HepG2 (cell line): ENCODE measurements at regions of chr2 and their contacts with region 1.

Region 1: GRCh38 chr2:202238234-202239197 is at the start of gene SUMO1:
- DNase-seq: peak; percentile 94
- ATAC-seq: peak; percentile 95
- H3K4me3 ChIP-seq: peak within 1 kb of the TSS; percentile 96 to 99 (median 99)
- H3K27ac ChIP-seq: peak within 1 kb of the TSS; percentile 74
- H3K4me1 ChIP-seq: peaks cover 29% of the 10 kb centered on the region
- H3K27me3 ChIP-seq: peaks cover 0 to 3% of the 10 kb centered on the region in 2 experiments; a peak in 2 of 5 replicates
- CTCF ChIP-seq: peak; percentile 23; the same call in 1 of the 2 replicates
- EP300 ChIP-seq: no peak
- POLR2A ChIP-seq: peak; percentile 69 to 94
- RAD21 ChIP-seq: peak; percentile 46; the same call in 1 of the 2 replicates
- total RNA-seq, gene SUMO1: 173 and 267 TPM in 2 replicates

Region 2: DNA sequence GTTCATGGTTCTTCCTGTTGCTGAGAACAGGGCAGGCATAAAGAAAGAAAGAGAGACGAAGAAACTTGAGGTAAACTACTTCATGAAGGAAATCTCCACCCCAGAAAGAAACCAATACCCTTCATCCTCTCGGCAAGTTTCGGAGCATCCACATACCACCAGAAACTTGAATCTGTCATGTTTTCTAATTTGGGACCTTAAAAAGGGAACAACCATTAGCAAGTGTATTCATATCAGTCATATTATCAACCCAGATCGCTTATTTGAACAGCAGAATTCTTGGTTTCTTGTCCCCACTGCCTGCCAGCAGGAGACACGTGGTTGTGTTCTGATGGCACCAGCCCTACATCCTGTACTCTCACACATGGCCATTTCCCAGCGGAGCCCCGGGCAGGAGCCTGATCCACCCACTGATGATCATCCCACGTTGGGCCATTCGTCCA is 258.1 kb before region 1 on chr2:
- CTCF ChIA-PET with region 1: no interaction called
- POLR2A ChIA-PET with region 1: no interaction called
- in situ Hi-C with region 1: no loop called
- intact Hi-C with region 1: no loop called
- DNase-seq: no peak
- ATAC-seq: no peak
- H3K4me3 ChIP-seq: no peak overlapping the region
- H3K27ac ChIP-seq: no peak overlapping the region
- H3K4me1 ChIP-seq: peaks cover 28% of the 10 kb centered on the region
- H3K27me3 ChIP-seq: no peaks in the 10 kb centered on the region; a peak in 2 of 5 replicates
- CTCF ChIP-seq: no peak
- EP300 ChIP-seq: no peak
- POLR2A ChIP-seq: no peak
- RAD21 ChIP-seq: no peak

Region 3: DNA sequence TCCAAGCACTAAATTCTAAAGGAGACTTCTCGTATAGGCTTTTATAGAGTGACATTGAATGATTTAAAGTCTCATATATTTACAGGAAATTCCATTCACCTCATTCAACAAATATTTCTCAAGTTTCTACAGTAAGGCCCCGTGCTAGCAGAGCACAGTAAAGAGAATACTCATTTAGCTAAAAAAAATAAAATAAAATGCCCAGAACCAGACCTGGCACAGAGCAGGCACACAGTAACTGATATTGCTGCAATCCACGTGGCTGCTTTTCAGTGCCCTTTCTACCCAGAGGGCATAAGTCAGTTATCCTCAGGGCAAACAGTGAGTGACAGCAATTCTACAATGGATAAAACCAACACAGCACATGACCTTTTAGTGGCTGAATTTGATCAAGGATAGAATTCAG is 52.7 kb before region 1 on chr2:
- CTCF ChIA-PET with region 1: no interaction called
- POLR2A ChIA-PET with region 1: no interaction called
- in situ Hi-C with region 1: no loop called
- intact Hi-C with region 1: no loop called
- DNase-seq: peak; percentile 15
- ATAC-seq: no peak; the same call in 2 of the 3 replicates
- H3K4me3 ChIP-seq: no peak overlapping the region
- H3K27ac ChIP-seq: no peak overlapping the region
- H3K4me1 ChIP-seq: peaks cover 42% of the 10 kb centered on the region
- H3K27me3 ChIP-seq: no peaks in the 10 kb centered on the region
- CTCF ChIP-seq: no peak
- EP300 ChIP-seq: no peak
- POLR2A ChIP-seq: no peak
- RAD21 ChIP-seq: no peak

Region 4: DNA sequence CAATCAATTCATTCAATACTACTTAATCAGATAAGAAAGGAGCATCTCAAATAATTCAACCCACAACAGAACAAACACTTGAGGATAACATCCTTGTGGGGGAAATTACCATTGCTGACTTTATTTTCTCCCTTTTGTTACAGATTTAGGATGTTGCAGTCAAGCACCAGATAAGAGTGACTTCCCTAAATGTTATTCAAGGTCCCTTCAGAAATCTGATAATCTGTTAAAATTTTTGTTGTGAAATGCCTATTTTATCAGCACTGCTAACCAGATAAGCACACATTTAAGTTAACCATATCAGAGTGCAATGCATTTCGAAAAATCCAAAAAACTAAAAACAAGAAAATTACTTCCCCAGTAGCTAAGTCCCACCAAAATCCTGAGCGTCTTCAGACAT is 33.7 kb before region 1 on chr2:
- CTCF ChIA-PET with region 1: no interaction called
- POLR2A ChIA-PET with region 1: no interaction called
- in situ Hi-C with region 1: no loop called
- intact Hi-C with region 1: no loop called
- DNase-seq: no peak
- ATAC-seq: no peak
- H3K4me3 ChIP-seq: no peak overlapping the region
- H3K27ac ChIP-seq: no peak overlapping the region
- H3K4me1 ChIP-seq: no peaks in the 10 kb centered on the region
- H3K27me3 ChIP-seq: no peaks in the 10 kb centered on the region
- CTCF ChIP-seq: no peak
- EP300 ChIP-seq: no peak
- POLR2A ChIP-seq: no peak
- RAD21 ChIP-seq: no peak

Region 5: DNA sequence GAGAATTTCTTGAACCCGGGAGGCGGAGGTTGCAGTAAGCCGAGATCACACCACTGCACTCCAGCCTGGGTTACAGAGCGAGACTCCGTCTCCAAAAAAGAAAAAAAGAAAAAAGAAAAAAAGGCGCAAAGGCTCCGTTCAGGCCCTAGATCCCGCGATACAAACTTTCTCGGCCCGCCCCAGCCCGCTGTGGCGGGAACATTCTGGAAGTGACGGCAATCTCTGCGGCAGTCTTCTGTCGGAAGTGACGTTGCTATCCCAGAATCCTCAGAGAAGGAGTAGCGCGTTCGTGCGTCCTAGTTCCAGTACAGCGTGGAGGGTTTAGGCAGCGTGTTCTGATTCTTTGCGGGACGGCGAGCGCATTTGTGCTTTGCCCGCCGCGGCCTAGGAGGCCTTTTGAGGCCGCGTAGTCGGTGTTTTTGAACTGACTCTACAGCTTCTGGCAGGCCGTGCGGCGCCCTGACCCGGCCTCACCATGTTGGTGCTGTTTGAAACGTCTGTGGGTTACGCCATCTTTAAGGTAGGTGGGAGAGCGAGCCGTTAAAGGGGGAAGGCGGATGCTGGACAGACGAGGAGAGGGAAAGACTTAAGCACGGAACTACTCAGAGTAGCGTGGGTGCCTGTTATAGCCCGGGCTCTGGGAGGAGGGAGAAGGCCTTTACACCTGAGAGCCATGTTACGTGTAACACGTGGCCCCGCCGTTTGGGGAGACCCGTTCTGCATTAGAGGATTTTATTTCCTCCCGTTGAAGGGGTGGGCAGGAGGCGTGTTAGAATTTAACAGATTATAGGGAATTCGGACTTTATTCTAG is 27.2 kb after region 1 on chr2 and contains the start of gene NOP58:
- CTCF ChIA-PET with region 1: no interaction called
- POLR2A ChIA-PET with region 1: interaction called, 12 read pairs
- in situ Hi-C with region 1: no loop called
- intact Hi-C with region 1: loop called (anchors 2 kb)
- DNase-seq: peak; percentile 97
- ATAC-seq: peak; percentile 93
- H3K4me3 ChIP-seq: peak within 1 kb of the TSS; percentile 75 to 97 (median 91)
- H3K27ac ChIP-seq: peak within 1 kb of the TSS; percentile 93
- H3K4me1 ChIP-seq: peaks cover 43% of the 10 kb centered on the region
- H3K27me3 ChIP-seq: no peaks in the 10 kb centered on the region; a peak in 1 of 5 replicates
- CTCF ChIP-seq: 0 out of 2 replicates have a peak, but pooled peaks have one; percentile 5
- EP300 ChIP-seq: peak; percentile 42 to 51; a peak in 3 of 4 replicates
- POLR2A ChIP-seq: peak; percentile 99
- RAD21 ChIP-seq: 0 out of 2 replicates have a peak, but pooled peaks have one; percentile 24
- total RNA-seq, gene NOP58: 203 and 220 TPM in 2 replicates